ENCODE measurements at regions of chrX and their contacts with region 1.

Region 1: DNA sequence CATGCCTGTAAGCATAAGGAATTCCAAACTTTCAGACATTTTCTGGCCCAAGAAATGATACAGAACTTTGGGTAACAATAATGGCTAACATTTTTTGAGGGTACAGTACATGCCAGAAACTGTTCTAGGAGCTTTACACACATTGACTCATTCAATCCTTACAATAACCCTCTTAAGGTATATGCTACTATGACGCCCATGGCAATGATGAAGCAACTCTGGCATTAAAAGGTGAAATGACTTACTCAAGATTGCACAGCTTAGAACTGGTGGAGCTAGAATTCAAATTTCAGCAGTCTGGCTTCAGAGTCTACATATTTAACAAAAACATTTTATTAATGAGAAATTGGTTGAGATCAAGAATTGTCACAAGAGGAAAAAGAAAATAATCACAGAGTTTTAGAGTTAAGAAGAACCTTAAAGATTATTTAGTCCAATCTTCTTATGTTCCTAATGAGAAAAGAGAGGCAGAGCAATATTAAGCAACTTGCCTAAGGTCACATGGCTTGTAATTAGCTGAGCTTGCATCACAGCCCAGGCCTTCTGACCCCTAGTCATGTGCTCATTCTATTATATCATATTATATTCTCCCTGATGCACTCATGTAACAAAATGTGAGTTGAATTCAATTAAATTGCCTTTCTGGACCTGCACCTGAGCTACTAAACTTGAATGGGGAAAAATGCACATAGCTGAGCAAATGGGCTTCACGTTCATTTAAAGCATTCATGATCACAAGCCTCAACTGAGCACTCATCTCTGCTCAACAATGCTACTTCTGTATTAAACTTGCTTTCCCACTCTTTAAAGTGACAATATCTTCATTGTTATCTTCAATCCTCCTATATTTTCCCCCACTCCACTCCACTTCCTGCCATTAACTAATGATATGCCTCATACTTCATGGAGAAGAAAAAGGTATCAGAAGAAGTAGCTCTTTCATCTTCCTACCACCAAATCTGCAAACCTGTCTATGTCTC is 73.2 kb downstream of the ENOX2 start:
- DNase-seq: no peak
- H3K4me3 Mint-ChIP-seq: no peak overlapping the region
- H3K27ac Mint-ChIP-seq: no peak overlapping the region
- H3K4me1 Mint-ChIP-seq: peaks cover 9% of the 10 kb centered on the region
- H3K27me3 Mint-ChIP-seq: no peaks in the 10 kb centered on the region

Region 2: DNA sequence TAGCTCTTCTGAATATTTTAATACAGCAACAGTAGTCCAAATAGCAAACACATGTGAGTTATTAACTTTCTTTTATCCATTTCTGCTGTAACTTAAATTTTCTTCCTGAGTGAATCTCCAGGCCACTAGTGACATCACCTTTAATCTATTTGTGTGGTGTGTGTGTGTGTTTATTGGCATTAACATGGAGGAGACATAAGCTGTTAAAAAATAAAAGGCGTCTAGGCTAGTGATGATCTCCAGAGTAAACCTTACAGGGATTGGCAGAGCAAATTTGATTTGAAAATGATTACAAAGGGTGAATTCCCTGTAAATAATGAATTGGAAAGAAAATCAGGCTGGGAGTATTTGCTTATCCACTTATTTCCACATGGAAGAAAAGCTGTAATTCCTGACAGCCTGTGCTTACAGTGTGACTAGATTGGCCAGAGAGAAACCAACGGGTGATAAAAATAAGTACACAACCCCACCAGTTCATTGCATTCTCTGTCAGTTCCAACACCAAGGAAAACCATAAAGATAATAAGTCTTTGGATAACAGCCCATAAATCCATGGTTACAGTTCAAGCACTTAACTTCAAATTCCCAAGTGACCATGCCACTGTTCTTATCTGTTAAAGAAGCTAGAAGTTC is 112.9 kb before region 1 on chrX:
- CTCF ChIA-PET with region 1: no interaction called
- intact Hi-C with region 1: no loop called
- DNase-seq: no peak
- H3K4me3 Mint-ChIP-seq: no peak overlapping the region
- H3K27ac Mint-ChIP-seq: no peak overlapping the region
- H3K4me1 Mint-ChIP-seq: no peaks in the 10 kb centered on the region
- H3K27me3 Mint-ChIP-seq: no peaks in the 10 kb centered on the region

Region 3: GRCh38 chrX:130793966-130794365 is 35.9 kb before region 1 on chrX:
- CTCF ChIA-PET with region 1: no interaction called
- intact Hi-C with region 1: loop called (anchors 1 kb)
- DNase-seq: no peak
- H3K4me3 Mint-ChIP-seq: no peak overlapping the region
- H3K27ac Mint-ChIP-seq: no peak overlapping the region
- H3K4me1 Mint-ChIP-seq: no peaks in the 10 kb centered on the region
- H3K27me3 Mint-ChIP-seq: no peaks in the 10 kb centered on the region

Measured in activated naive CD4-positive, alpha-beta T cell treated with anti-CD3 and anti-CD28 coated beads for 36 hours (primary cell).